ENCODE measurements at regions of chr2 and their contacts with region 1.

Region 1: DNA sequence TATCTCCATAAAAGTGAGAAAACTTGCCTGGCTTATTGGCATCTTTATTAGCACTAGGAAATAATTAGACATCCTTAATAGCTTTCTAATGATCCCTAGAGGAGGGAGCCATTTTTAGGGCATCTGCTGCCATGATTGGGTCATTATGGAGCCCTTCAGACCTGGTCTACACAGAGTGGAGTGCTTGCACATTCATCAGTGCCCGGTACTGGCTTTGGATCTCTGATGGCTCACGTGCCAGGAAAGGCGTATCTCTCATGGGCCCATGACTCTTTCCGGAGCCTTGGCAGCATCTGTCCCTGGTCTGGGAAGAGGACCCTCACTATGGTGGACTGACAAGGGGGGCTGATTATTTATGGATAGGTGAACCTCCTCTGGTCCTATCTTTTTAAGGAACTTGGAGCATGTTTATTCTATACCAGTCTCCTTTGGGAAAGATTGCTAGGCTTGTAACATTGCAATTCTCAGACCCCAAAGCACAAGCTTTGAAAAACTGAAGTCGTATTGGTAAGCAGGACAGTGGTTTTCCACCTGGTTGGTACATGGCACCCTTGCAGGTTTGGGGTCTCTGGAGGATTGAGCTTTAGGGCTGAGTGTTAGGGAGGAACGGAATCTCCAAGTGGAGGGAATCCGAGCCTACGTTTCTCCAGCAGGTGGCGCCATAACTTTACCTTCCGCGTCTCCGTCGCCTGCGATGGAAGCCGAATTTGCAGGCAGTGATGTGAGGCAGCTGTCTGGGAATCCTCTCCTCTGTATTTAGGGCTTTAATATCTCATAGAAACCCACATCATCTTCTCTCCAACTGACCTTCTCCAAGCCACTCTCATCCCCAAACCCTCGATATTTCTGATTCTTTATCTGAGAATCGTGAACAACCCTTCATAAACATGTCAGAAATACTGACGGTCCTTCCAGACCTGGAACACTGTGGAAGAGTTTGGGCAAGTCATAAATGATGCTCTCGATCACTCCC is 27.8 kb downstream of the SIX2 start:
- DNase-seq: peak; percentile 72
- H3K4me3 ChIP-seq: no peak overlapping the region
- H3K27ac ChIP-seq: no peak overlapping the region
- H3K4me1 ChIP-seq: no peaks in the 10 kb centered on the region
- H3K27me3 ChIP-seq: peaks cover 54% of the 10 kb centered on the region
- CTCF ChIP-seq: peak; percentile 77 to 88 (median 79)
- EP300 ChIP-seq: no peak
- POLR2A ChIP-seq: no peak

Region 2: DNA sequence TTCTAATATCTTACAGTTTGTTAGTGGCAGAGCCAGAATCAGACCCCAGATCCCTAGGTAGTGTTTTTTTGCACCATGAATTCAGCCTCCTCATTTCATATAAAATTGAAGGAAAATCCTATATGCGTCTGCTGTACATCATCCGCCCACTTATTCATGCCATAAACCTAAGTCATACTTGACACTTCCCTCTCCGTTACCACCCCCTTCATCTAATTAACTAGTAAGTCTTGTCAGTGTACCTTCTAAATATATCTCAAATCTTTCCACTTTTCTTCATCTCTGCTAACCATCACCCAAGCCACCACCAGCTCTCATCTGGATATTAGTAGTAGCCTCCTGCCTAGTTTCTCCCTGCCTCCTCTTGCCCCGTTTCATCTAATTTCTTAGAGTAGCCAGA is 288.6 kb before region 1 on chr2:
- in situ Hi-C with region 1: no loop called
- intact Hi-C with region 1: no loop called
- DNase-seq: no peak
- H3K4me3 ChIP-seq: no peak overlapping the region
- H3K27ac ChIP-seq: no peak overlapping the region
- H3K4me1 ChIP-seq: no peaks in the 10 kb centered on the region
- H3K27me3 ChIP-seq: no peaks in the 10 kb centered on the region
- CTCF ChIP-seq: no peak
- EP300 ChIP-seq: no peak
- POLR2A ChIP-seq: no peak

Region 3: GRCh38 chr2:45000921-45001868 is 19.8 kb after region 1 on chr2:
- in situ Hi-C with region 1: no loop called
- intact Hi-C with region 1: no loop called
- DNase-seq: no peak
- H3K4me3 ChIP-seq: peak overlapping the region in 2 of 4 donors; percentile 22 to 43
- H3K27ac ChIP-seq: no peak overlapping the region
- H3K4me1 ChIP-seq: peaks cover 10 to 31% (median 20%) of the 10 kb centered on the region in 4 donors
- H3K27me3 ChIP-seq: peaks cover 100% of the 10 kb centered on the region
- CTCF ChIP-seq: no peak
- EP300 ChIP-seq: no peak
- POLR2A ChIP-seq: no peak

Region 4: DNA sequence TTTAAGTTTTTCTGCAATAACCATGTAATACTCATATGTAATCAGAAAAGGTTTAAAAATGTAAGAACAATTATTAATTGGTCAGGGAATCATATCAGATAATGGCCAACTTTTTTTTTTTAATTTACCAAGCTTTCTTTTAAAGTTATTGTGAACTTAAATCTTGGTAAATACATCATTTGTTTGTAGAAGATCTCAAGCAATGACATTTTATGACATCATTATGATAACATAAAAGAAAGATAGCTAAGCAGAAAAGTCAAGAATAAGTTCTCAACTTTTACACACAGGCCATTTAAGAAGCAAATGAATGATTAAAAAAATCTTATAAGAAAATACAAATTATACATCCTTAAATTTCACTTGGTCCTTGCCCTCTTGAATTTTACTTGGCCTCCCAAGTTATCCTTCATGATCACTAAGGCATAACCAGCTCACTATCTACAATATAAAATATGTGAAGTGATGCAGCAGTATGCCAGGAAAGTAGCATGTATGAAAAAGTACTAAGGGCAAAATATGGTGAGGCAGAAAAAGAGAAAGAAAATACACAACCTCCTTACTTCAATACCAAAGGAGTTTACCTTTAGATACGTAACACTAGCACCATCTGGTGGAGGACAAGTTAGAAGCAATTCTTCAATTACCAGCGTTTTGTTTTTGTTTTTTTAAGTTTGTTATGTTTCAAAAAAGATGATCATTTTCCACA is 513.0 kb after region 1 on chr2:
- in situ Hi-C with region 1: loop called (anchors 5 to 10 kb)
- intact Hi-C with region 1: loop called (anchors 2 kb)
- DNase-seq: no peak
- H3K4me3 ChIP-seq: no peak overlapping the region
- H3K27ac ChIP-seq: no peak overlapping the region
- H3K4me1 ChIP-seq: no peaks in the 10 kb centered on the region
- H3K27me3 ChIP-seq: no peaks in the 10 kb centered on the region
- CTCF ChIP-seq: peak; percentile 57 to 74 (median 70)
- EP300 ChIP-seq: no peak
- POLR2A ChIP-seq: no peak

Region 5: GRCh38 chr2:45585267-45585861 is 603.9 kb after region 1 on chr2:
- in situ Hi-C with region 1: loop called in 1 of 4 experiments (anchors 25 kb)
- intact Hi-C with region 1: no loop called
- DNase-seq: no peak
- H3K4me3 ChIP-seq: no peak overlapping the region
- H3K27ac ChIP-seq: no peak overlapping the region
- H3K4me1 ChIP-seq: peaks cover 0 to 13% (median 0%) of the 10 kb centered on the region in 4 donors
- H3K27me3 ChIP-seq: no peaks in the 10 kb centered on the region
- CTCF ChIP-seq: peak; percentile 59 to 71 (median 68)
- EP300 ChIP-seq: no peak
- POLR2A ChIP-seq: no peak